Mammary epithelial cell (primary cell): ENCODE measurements at regions of chr9 and their contacts with region 1.

Region 1: DNA sequence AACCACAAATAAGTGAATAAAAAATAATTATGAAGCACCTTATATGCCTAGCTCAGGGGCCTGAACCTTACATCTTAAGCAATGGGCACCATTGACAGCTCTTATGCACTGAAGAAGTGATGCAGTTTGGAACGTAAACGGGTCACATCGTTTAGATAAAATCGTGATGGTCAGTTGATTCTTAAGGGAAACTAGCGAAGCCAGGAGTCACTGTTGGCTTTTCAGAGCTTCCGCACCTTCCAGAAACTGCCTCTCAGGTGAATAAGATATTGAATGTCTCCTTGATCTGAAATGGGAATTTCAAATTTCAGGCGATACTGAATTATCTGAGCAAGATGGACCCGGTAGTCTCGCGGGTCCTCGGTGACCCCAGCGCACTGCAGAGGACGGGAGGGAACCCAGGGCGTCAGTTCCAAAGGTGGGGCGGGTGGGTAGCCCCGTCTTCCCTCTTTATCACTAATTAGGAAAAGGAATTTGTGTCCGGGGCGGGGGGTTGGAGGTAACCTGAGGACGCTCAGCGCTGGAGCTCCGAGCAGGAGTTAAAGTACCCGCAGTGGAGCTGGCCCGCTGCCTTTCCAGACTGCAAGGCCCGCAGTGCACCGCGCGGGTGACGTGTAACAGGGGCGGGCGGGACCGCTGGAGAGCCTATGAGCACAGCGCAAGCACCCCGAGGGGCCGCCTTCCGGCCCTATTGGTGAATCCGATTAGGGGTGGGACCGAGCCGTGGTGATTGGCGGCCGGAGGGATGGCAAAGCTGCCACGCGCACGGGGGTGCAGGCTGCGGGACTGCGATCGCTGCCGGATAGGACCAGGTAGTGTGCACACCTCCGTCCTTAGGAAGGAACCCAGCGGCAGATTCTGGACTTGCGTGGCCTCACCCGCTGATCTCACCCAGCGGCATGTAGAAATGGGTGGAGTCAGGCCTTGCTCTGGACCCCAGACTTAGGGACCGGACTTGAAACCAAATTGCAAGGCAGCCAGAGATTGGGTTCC is 19.7 kb upstream of the GARNL3 start:
- DNase-seq: peak; percentile 93
- H3K4me3 ChIP-seq: peak overlapping the region; percentile 52 to 67 (median 56)
- H3K27ac ChIP-seq: peak overlapping the region; percentile 35
- H3K4me1 ChIP-seq: no peaks in the 10 kb centered on the region
- H3K27me3 ChIP-seq: no peaks in the 10 kb centered on the region
- CTCF ChIP-seq: no peak

Region 2: GRCh38 chr9:127263664-127264063 is 18.8 kb after region 1 on chr9:
- CTCF ChIA-PET with region 1: no interaction called
- dilution Hi-C with region 1: no loop called
- in situ Hi-C with region 1: no loop called
- intact Hi-C with region 1: loop called (anchors 1 kb)
- DNase-seq: no peak
- H3K4me3 ChIP-seq: no peak overlapping the region
- H3K27ac ChIP-seq: no peak overlapping the region
- H3K4me1 ChIP-seq: no peaks in the 10 kb centered on the region
- H3K27me3 ChIP-seq: no peaks in the 10 kb centered on the region
- CTCF ChIP-seq: no peak